T-cell (primary cell): ENCODE measurements at regions of chr6 and their contacts with region 1.

Region 1: GRCh38 chr6:142155895-142156757 is 9.1 kb downstream of the VTA1 start:
- DNase-seq: peak in 1 of 35 experiments; percentile 44
- ATAC-seq: peak in 3 of 4 experiments; percentile 23 to 71 (median 50)
- H3K4me3 ChIP-seq: no peak overlapping the region
- H3K4me3 Mint-ChIP-seq: peak overlapping the region in 2 of 3 donors; percentile 8 to 11
- H3K27ac ChIP-seq: no peak overlapping the region
- H3K27ac Mint-ChIP-seq: peak overlapping the region in 1 of 2 donors; percentile 62
- H3K4me1 ChIP-seq: peaks cover 4 to 11% of the 10 kb centered on the region in 2 experiments
- H3K4me1 Mint-ChIP-seq: peaks cover 67 to 76% (median 69%) of the 10 kb centered on the region in 3 donors
- H3K27me3 ChIP-seq: no peaks in the 10 kb centered on the region
- H3K27me3 Mint-ChIP-seq: no peaks in the 10 kb centered on the region

Region 2: DNA sequence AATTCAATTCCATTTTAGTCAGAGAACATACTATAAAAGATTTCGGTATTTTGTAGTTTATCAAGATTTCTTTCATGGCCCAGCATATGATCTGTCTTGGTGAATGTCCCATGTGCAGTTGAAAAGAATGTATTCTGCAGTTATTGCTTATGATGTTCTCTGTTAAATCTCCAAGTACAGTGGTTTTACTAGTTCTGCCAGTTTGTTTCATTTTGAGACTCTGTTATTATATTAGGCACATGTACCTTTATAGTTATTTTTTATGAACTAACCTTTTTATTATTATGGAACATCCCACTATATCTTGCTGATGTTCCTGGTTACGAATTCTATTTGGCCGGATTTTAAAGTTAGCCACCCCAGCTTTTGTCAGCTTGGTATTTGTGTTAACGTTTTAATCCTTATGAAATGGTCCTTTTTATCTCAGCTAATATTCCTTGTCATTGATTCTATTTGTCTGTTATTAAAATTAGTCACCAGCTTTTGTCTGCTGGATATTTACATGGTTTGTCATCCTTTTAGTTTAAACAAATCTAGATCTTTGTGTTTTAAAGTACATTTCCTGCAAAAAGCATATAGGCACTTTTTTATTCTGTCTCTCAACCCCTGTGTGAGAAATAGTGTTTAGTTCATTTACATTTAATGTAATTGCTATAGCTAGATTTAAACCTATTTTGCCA is 39.9 kb after region 1 on chr6:
- CTCF ChIA-PET with region 1: interaction called, 4 to 11 read pairs
- POLR2A ChIA-PET with region 1: no interaction called
- DNase-seq: no peak
- ATAC-seq: no peak
- H3K4me3 ChIP-seq: no peak overlapping the region
- H3K4me3 Mint-ChIP-seq: no peak overlapping the region
- H3K27ac ChIP-seq: no peak overlapping the region
- H3K27ac Mint-ChIP-seq: peak overlapping the region; percentile 31 to 48
- H3K4me1 ChIP-seq: peaks cover 0 to 13% of the 10 kb centered on the region in 2 experiments
- H3K4me1 Mint-ChIP-seq: peaks cover 43 to 53% (median 48%) of the 10 kb centered on the region in 3 donors
- H3K27me3 ChIP-seq: no peaks in the 10 kb centered on the region
- H3K27me3 Mint-ChIP-seq: no peaks in the 10 kb centered on the region

Region 3: DNA sequence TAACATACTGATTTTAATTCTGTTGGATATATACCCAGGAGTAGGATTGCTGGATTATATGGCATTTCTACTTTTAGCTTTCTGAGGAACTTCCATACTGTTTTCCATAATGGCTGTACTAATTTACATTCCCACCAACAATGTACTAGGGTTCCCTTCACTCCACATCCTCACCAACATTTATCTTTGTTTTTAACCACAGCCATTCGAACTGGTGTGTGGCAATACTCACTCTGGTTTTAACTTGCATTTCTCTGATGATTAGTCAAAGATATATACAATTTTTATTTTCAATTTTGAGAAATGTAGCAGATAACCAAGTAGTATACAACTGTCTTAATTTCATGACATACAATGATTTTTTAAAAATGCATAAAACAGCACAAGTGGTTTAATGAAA is 115.3 kb after region 1 on chr6:
- CTCF ChIA-PET with region 1: interaction called in 1 of 2 experiments, 14 read pairs
- POLR2A ChIA-PET with region 1: no interaction called
- DNase-seq: no peak
- ATAC-seq: no peak
- H3K4me3 ChIP-seq: no peak overlapping the region
- H3K4me3 Mint-ChIP-seq: no peak overlapping the region
- H3K27ac ChIP-seq: no peak overlapping the region
- H3K27ac Mint-ChIP-seq: no peak overlapping the region
- H3K4me1 ChIP-seq: no peaks in the 10 kb centered on the region
- H3K4me1 Mint-ChIP-seq: no peaks in the 10 kb centered on the region
- H3K27me3 ChIP-seq: peaks cover 0 to 8% of the 10 kb centered on the region in 2 experiments
- H3K27me3 Mint-ChIP-seq: peaks cover 13 to 19% of the 10 kb centered on the region in 2 donors